A673 (cell line): ENCODE measurements at regions of chr7 and their contacts with region 1.

Region 1: GRCh38 chr7:150962553-150963399 is 15.3 kb downstream of the KCNH2 start:
- DNase-seq: peak; percentile 68
- H3K4me3 ChIP-seq: no peak overlapping the region
- H3K27ac ChIP-seq: no peak overlapping the region
- H3K4me1 ChIP-seq: peaks cover 8% of the 10 kb centered on the region
- H3K27me3 ChIP-seq: peaks cover 9% of the 10 kb centered on the region
- CTCF ChIP-seq: peak; percentile 95

Region 2: GRCh38 chr7:150988230-150989226 is 25.8 kb after region 1 on chr7:
- CTCF ChIA-PET with region 1: interaction called, 6 read pairs
- POLR2A ChIA-PET with region 1: no interaction called
- intact Hi-C with region 1: loop called (anchors 1 kb)
- DNase-seq: peak; percentile 81
- H3K4me3 ChIP-seq: no peak overlapping the region
- H3K27ac ChIP-seq: no peak overlapping the region
- H3K4me1 ChIP-seq: no peaks in the 10 kb centered on the region
- H3K27me3 ChIP-seq: no peaks in the 10 kb centered on the region
- CTCF ChIP-seq: peak; percentile 89

Region 3: GRCh38 chr7:151013713-151014497 is 51.1 kb after region 1 on chr7:
- CTCF ChIA-PET with region 1: interaction called, 7 read pairs
- POLR2A ChIA-PET with region 1: no interaction called
- intact Hi-C with region 1: loop called (anchors 2 kb)
- DNase-seq: peak; percentile 84
- H3K4me3 ChIP-seq: peak overlapping the region; percentile 23
- H3K27ac ChIP-seq: no peak overlapping the region
- H3K4me1 ChIP-seq: peaks cover 25% of the 10 kb centered on the region
- H3K27me3 ChIP-seq: no peaks in the 10 kb centered on the region
- CTCF ChIP-seq: peak; percentile 26; the same call in 1 of the 2 replicates